Activated B cell treated with CpG ODN at 0.5 μM for 24 hours (primary cell): ENCODE measurements at regions of chr22 and their contacts with region 1.

Region 1: DNA sequence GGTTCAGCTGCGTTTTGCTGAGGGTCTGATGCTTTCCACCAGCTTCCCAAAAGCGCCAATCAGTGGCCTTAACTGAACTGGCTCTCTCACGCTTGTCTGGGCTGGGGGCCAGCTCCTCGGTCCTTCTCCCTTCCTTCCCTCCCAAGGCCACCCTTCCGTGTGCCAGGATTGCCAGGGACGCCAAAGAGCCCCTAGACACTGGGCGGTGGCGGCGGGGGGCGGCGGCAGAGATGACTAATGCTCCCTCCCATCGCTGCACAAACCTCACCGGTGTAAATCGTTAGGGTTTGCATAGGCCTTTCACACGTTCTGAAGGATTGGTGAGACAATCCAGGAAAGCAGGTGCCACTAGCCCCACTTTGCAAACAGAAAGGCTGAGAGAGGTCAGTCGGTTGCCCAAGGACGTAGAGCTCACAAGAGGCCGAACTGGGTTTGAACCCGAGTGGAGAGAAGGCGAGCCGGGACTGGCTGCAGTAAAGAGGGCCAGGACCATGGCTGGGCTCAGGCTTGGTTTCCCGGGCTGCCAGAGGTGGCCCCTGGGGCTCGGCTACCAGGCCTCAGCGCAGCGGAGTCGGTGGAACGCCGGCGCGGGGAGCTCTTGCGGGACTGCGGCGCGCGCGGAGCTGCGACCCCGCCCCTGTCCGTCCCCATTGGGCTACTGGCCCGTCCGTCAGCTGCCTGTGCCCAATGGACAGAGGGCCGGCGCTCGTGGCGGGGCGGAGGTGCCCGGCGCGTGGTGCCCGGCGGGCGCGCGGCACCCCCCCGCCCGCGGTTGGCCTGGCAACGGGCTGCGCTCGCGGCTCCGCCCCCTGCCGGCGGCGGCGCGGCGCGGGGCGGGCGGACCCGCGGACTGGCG is 589 bp upstream of the GNAZ start:
- DNase-seq: peak; percentile 95
- ATAC-seq: peak; percentile 97
- H3K4me3 Mint-ChIP-seq: peak overlapping the region; percentile 86
- H3K27ac Mint-ChIP-seq: peak overlapping the region; percentile 68
- H3K4me1 Mint-ChIP-seq: peaks cover 38% of the 10 kb centered on the region
- H3K27me3 Mint-ChIP-seq: no peaks in the 10 kb centered on the region
- CTCF ChIP-seq: no peak

Region 2: DNA sequence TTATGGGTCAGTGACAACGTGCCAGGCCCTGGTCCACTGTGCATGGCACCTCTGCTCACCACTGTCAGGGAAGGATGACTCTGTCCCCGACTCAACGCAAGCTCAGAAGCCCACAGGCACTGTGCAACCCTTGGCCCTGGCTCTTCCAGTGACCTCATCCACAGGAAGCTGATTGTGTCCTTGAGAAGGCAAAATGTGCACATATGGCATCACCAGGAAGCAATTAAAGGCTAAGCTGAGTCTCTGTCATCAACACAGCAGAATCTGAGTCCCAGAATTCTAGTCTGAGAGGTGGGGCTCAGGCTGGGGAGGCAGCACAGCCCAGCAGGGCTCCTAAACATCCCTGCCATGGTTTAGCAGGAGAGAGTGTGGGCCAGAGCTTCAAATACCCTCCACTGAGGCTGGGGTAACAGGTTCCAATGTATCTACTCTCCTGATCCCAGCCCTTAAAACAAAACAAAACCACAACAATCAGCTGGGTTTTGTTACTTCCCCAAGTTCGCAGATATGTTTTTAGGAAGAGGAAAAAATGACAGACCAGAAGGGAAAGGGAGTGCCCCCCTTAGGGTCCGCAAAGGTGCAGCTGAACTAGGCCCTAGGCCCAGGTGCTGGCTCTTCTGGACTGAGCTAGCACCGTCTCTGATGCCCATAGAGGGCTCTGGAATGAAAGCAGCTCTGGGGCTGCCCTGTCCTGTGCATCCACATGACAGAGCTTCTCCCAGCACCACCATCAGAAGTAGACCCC is 32.9 kb before region 1 on chr22:
- CTCF ChIA-PET with region 1: interaction called, 3 read pairs
- POLR2A ChIA-PET with region 1: interaction called, 11 read pairs
- intact Hi-C with region 1: loop called (anchors 5 kb)
- DNase-seq: no peak
- ATAC-seq: peak; percentile 36
- H3K4me3 Mint-ChIP-seq: peak overlapping the region; percentile 45
- H3K27ac Mint-ChIP-seq: peak overlapping the region; percentile 75
- H3K4me1 Mint-ChIP-seq: peaks cover 59% of the 10 kb centered on the region
- H3K27me3 Mint-ChIP-seq: no peaks in the 10 kb centered on the region
- CTCF ChIP-seq: no peak

Region 3: DNA sequence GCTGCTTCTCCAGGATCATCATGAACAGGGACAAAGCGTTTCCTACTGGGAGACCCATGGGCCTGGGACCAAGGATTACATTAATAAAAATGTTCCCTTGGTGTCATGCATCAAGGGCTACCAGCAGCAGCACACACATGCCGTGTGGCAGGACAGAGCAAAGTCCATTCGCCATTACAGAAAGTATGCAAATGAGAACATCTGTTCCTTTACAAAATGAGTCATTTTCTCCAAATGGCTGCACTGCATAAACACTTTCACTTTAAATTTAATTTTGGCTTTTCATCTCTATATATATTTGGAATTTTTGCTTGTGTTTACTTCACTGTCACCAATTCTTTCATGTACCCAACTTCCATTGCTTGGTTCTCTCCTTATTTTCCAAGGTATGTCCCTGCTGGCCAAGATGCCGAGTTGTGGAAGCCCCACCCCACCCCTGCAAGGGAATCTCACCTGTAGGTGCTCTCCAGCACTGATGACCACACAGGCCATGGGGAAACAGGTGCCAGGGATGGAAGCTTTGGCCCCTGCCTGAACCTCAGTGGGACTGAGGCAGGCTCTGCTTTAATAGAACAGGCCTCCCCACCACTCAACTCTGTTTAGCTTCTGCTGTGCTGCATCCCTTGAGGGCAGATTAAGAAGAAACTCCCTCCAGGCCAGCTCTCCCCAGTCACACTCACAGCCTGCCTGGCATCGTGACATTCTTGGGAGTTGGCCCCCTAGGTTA is 15.0 kb before region 1 on chr22:
- CTCF ChIA-PET with region 1: no interaction called
- POLR2A ChIA-PET with region 1: interaction called, 4 read pairs
- intact Hi-C with region 1: loop called (anchors 1 kb)
- DNase-seq: peak; percentile 21
- ATAC-seq: peak; percentile 86
- H3K4me3 Mint-ChIP-seq: peak overlapping the region; percentile 64
- H3K27ac Mint-ChIP-seq: peak overlapping the region; percentile 83
- H3K4me1 Mint-ChIP-seq: peaks cover 38% of the 10 kb centered on the region
- H3K27me3 Mint-ChIP-seq: no peaks in the 10 kb centered on the region
- CTCF ChIP-seq: no peak

Region 4: DNA sequence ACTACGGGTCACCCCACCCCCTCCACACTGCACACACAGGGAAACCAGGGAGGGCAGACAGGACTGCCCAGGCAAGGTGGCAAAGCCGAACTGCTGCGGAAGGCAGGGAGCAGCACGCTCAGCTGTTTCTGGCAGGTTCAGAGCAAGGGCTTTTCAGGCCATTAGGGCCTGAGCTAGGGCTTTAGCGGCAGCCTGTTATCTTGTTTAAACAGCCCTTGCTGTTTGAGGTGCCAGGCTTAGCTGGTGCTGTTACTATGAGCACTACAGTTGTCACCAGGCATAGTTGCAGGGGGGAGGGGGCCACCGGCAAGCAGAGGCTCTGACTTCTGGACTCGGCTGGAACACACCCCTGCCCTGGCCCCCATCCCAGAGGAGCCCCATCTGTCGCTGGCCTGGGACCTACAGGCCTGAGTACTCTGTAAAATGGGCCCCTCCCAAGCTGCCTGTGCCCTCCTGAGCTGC is 37.2 kb after region 1 on chr22:
- CTCF ChIA-PET with region 1: no interaction called
- POLR2A ChIA-PET with region 1: no interaction called
- intact Hi-C with region 1: no loop called
- DNase-seq: no peak
- ATAC-seq: no peak
- H3K4me3 Mint-ChIP-seq: no peak overlapping the region
- H3K27ac Mint-ChIP-seq: no peak overlapping the region
- H3K4me1 Mint-ChIP-seq: no peaks in the 10 kb centered on the region
- H3K27me3 Mint-ChIP-seq: no peaks in the 10 kb centered on the region
- CTCF ChIP-seq: no peak

Region 5: GRCh38 chr22:23144932-23145873 is 75.5 kb after region 1 on chr22 and contains the start of gene RAB36:
- CTCF ChIA-PET with region 1: interaction called, 5 read pairs
- POLR2A ChIA-PET with region 1: interaction called, 6 read pairs
- intact Hi-C with region 1: loop called (anchors 2 kb)
- DNase-seq: peak; percentile 91
- ATAC-seq: peak; percentile 65
- H3K4me3 Mint-ChIP-seq: peak within 1 kb of the TSS; percentile 81
- H3K27ac Mint-ChIP-seq: peak within 1 kb of the TSS; percentile 86
- H3K4me1 Mint-ChIP-seq: peaks cover 56% of the 10 kb centered on the region
- H3K27me3 Mint-ChIP-seq: no peaks in the 10 kb centered on the region
- CTCF ChIP-seq: no peak
- total RNA-seq, gene RAB36: 1.7 and 2.1 TPM in 2 replicates